ENCODE measurements at regions of chr12 and their contacts with region 1.

Region 1: GRCh38 chr12:63294327-63294632 is 143.3 kb upstream of the AVPR1A start:
- DNase-seq: peak; percentile 92
- H3K4me3 ChIP-seq: no peak overlapping the region
- H3K27ac ChIP-seq: peak overlapping the region; percentile 93
- H3K4me1 ChIP-seq: peaks cover 22% of the 10 kb centered on the region
- H3K27me3 ChIP-seq: peaks cover 0 to 3% of the 10 kb centered on the region in 2 experiments
- CTCF ChIP-seq: no peak
- POLR2A ChIP-seq: no peak

Region 2: DNA sequence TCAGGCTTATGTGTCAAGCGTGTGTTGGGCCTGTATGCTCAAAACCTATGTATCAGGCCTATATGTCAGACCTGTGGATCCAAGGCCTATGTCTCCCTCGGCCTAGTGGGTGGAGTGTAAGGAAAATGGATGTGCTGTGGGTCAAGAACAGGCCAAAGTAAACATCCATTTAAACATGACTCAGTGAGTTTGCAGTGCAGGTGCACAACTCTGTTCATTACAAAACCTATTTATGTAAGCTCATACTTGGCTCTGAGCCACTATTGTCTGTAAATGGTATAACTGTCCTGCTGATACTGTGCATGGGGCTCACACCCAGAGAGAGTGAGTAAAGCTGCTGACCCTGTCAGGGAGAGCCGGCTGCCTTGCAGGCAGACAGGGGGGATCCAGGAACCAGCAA is 106.4 kb after region 1 on chr12:
- CTCF ChIA-PET with region 1: no interaction called
- POLR2A ChIA-PET with region 1: no interaction called
- dilution Hi-C with region 1: no loop called
- intact Hi-C with region 1: loop called (anchors 1 kb)
- DNase-seq: peak; percentile 95
- H3K4me3 ChIP-seq: no peak overlapping the region
- H3K27ac ChIP-seq: peak overlapping the region; percentile 78
- H3K4me1 ChIP-seq: peaks cover 15% of the 10 kb centered on the region
- H3K27me3 ChIP-seq: no peaks in the 10 kb centered on the region
- CTCF ChIP-seq: no peak
- POLR2A ChIP-seq: peak; percentile 61

Region 3: GRCh38 chr12:63779498-63780481 is 485.5 kb after region 1 on chr12 and contains the start of gene RXYLT1:
- CTCF ChIA-PET with region 1: no interaction called
- POLR2A ChIA-PET with region 1: no interaction called
- dilution Hi-C with region 1: no loop called
- intact Hi-C with region 1: loop called (anchors 5 kb)
- DNase-seq: peak; percentile 82
- H3K4me3 ChIP-seq: peak within 1 kb of the TSS; percentile 60 to 81 (median 74)
- H3K27ac ChIP-seq: peak within 1 kb of the TSS; percentile 77
- H3K4me1 ChIP-seq: peaks cover 12% of the 10 kb centered on the region
- H3K27me3 ChIP-seq: peaks cover 8 to 29% of the 10 kb centered on the region in 2 experiments
- CTCF ChIP-seq: no peak
- POLR2A ChIP-seq: peak; percentile 75
- total RNA-seq, gene RXYLT1: 13.1 and 15.8 TPM in 2 replicates